IMR-90 (cell line): ENCODE measurements at regions of chr9 and their contacts with region 1.

Region 1: DNA sequence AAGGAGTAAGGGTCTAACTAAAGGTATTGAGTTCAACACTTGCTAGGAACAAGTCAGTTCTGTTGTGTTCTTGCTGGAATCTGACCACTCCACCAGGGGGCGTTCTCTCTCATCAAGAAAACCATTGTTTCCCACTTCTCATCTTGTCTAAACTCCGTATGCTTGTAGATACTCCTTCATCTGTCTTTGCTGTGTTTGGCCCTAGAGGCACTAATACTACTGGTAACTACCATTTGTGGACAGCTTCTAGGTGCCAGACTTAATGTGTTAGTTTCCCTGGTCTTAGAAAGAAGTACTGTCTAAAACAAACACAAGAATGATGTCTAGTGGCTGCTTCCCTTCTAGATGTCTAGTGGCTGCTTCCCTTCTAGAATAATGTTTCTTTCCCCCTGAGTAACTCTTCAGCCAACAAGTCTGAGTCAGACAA is 18.7 kb upstream of the PTPDC1 start:
- DNase-seq: peak; percentile 89
- ATAC-seq: peak; percentile 95
- H3K4me3 ChIP-seq: no peak overlapping the region
- H3K27ac ChIP-seq: no peak overlapping the region
- H3K4me1 ChIP-seq: no peaks in the 10 kb centered on the region
- H3K27me3 ChIP-seq: no peaks in the 10 kb centered on the region
- CTCF ChIP-seq: peak; percentile 80
- POLR2A ChIP-seq: no peak
- RAD21 ChIP-seq: peak; percentile 87

Region 2: DNA sequence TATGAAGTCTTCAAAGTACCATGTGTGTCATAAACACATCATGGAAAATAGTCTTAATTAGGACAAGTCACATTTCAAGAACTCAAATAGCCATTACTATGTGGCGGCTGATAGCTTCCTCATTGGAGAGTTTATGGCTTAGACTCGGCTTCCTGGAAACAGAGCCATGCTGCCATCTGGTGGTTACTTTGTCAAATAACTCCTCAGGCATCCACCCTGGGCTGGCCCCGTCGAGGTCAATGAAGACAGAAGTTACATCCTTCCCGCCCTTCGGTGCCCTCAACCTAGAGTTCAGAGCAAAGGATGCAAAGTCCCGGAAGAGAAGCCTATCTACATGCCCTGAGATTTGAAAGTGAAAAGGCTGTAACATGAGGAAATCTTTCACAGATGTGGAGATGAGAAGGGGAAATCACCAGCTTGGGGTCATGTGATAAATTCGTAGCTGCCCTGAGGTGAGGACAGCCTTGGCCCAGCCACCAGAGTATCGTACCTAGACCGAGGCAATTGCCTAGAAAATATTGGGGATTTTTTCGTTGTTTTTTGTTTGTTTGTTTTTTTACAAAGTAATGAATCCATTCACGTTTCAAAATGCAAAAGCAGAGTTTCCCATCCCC is 148.1 kb after region 1 on chr9:
- CTCF ChIA-PET with region 1: interaction called, 8 read pairs
- POLR2A ChIA-PET with region 1: no interaction called
- dilution Hi-C with region 1: no loop called
- in situ Hi-C with region 1: no loop called
- intact Hi-C with region 1: loop called (anchors 1 kb)
- DNase-seq: peak; percentile 72
- ATAC-seq: peak; percentile 98
- H3K4me3 ChIP-seq: no peak overlapping the region
- H3K27ac ChIP-seq: no peak overlapping the region
- H3K4me1 ChIP-seq: peaks cover 2% of the 10 kb centered on the region
- H3K27me3 ChIP-seq: peaks cover 2% of the 10 kb centered on the region; the same call in 1 of the 2 replicates
- CTCF ChIP-seq: peak; percentile 96
- POLR2A ChIP-seq: peak; percentile 54; the same call in 1 of the 2 replicates
- RAD21 ChIP-seq: peak; percentile 99